Breast epithelium (tissue), 4 donors: ENCODE measurements at regions of chr4 and their contacts with region 1.

Region 1: GRCh38 chr4:6546681-6547447 is 28.1 kb upstream of the MAN2B2 start:
- DNase-seq: no peak
- H3K4me3 ChIP-seq: no peak overlapping the region
- H3K27ac ChIP-seq: no peak overlapping the region
- H3K4me1 ChIP-seq: no peaks in the 10 kb centered on the region
- H3K27me3 ChIP-seq: peaks cover 0 to 41% of the 10 kb centered on the region in 2 donors
- CTCF ChIP-seq: peak in 2 of 3 donors; percentile 63 to 65
- POLR2A ChIP-seq: no peak

Region 2: GRCh38 chr4:4941741-4942140 is 1605.1 kb before region 1 on chr4:
- intact Hi-C with region 1: loop called (anchors 5 kb)
- DNase-seq: no peak
- H3K4me3 ChIP-seq: no peak overlapping the region
- H3K27ac ChIP-seq: no peak overlapping the region
- H3K4me1 ChIP-seq: no peaks in the 10 kb centered on the region
- H3K27me3 ChIP-seq: peaks cover 0 to 4% of the 10 kb centered on the region in 2 donors
- CTCF ChIP-seq: no peak
- POLR2A ChIP-seq: no peak